ENCODE measurements at regions of chr17 and their contacts with region 1.

Region 1: DNA sequence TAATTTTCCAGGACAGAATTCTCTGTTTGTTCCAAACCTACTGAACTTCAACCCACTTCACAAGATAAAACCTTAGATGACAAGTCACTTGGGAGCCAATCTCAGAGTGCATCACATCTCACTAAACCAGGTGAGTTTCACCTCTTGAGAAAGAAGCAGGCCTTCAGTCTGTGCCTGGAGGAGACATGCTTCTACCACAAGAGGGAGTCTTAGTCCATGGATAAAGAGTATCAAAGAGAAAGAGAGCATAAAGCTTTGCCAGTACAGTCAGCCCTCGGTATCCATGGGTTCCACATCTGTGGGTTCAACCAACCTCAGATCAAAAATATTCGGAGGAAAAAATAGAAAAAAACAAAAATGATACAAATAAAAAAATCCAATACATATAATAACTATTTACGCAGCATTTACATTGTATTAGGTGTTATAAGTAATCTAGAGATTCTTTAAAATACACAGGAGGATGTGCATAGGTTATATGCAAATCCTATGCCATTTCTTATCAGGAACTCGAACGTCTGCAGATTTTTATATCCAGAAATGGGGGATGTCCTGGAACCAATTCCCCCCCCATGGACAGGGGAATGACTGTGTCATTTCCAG is 37.7 kb downstream of the DUSP14 start:
- DNase-seq: peak in 3 of 9 experiments; percentile 13 to 69 (median 56)
- ATAC-seq: peak; percentile 77
- H3K4me3 ChIP-seq: no peak overlapping the region
- H3K4me3 Mint-ChIP-seq: no peak overlapping the region
- H3K27ac ChIP-seq: no peak overlapping the region
- H3K27ac Mint-ChIP-seq: peak overlapping the region; percentile 61
- H3K4me1 ChIP-seq: peaks cover 12% of the 10 kb centered on the region
- H3K4me1 Mint-ChIP-seq: peaks cover 18% of the 10 kb centered on the region
- H3K27me3 ChIP-seq: no peaks in the 10 kb centered on the region
- H3K27me3 Mint-ChIP-seq: no peaks in the 10 kb centered on the region
- CTCF ChIP-seq: peak; percentile 66

Region 2: GRCh38 chr17:36824678-36825091 is 702.7 kb before region 1 on chr17:
- CTCF ChIA-PET with region 1: no interaction called
- POLR2A ChIA-PET with region 1: no interaction called
- intact Hi-C with region 1: no loop called
- DNase-seq: no peak
- ATAC-seq: no peak
- H3K4me3 ChIP-seq: no peak overlapping the region
- H3K4me3 Mint-ChIP-seq: no peak overlapping the region
- H3K27ac ChIP-seq: no peak overlapping the region
- H3K27ac Mint-ChIP-seq: no peak overlapping the region
- H3K4me1 ChIP-seq: no peaks in the 10 kb centered on the region
- H3K4me1 Mint-ChIP-seq: no peaks in the 10 kb centered on the region
- H3K27me3 ChIP-seq: peaks cover 7 to 10% of the 10 kb centered on the region in 2 experiments
- H3K27me3 Mint-ChIP-seq: peaks cover 55% of the 10 kb centered on the region
- CTCF ChIP-seq: no peak

Region 3: GRCh38 chr17:37494401-37494831 is 32.9 kb before region 1 on chr17:
- CTCF ChIA-PET with region 1: no interaction called
- POLR2A ChIA-PET with region 1: no interaction called
- intact Hi-C with region 1: no loop called
- DNase-seq: no peak
- ATAC-seq: no peak
- H3K4me3 ChIP-seq: no peak overlapping the region
- H3K4me3 Mint-ChIP-seq: no peak overlapping the region
- H3K27ac ChIP-seq: no peak overlapping the region
- H3K27ac Mint-ChIP-seq: no peak overlapping the region
- H3K4me1 ChIP-seq: peaks cover 18% of the 10 kb centered on the region
- H3K4me1 Mint-ChIP-seq: peaks cover 17% of the 10 kb centered on the region
- H3K27me3 ChIP-seq: no peaks in the 10 kb centered on the region
- H3K27me3 Mint-ChIP-seq: no peaks in the 10 kb centered on the region
- CTCF ChIP-seq: no peak

Region 4: DNA sequence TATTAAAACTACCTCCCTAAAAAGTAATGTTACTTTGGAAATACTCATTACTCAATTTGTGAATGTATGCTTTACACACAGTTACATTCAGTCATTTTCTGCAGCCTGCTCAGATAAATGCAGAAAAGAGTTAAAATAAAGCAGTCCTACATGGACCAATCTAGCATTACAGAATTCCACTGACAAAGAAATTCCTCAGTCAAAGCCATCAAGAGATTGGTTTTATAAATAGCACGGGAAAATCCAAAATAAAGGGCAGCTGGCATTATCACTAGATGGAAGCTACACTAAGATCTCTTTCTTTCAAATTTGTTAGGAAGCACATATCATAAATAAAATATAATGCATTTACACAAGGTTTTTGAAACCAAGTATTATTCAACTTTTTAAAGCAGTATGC is 20.6 kb after region 1 on chr17:
- CTCF ChIA-PET with region 1: no interaction called
- POLR2A ChIA-PET with region 1: no interaction called
- intact Hi-C with region 1: no loop called
- DNase-seq: no peak
- ATAC-seq: no peak
- H3K4me3 ChIP-seq: no peak overlapping the region
- H3K4me3 Mint-ChIP-seq: no peak overlapping the region
- H3K27ac ChIP-seq: no peak overlapping the region
- H3K27ac Mint-ChIP-seq: peak overlapping the region; percentile 80
- H3K4me1 ChIP-seq: peaks cover 49% of the 10 kb centered on the region
- H3K4me1 Mint-ChIP-seq: peaks cover 73% of the 10 kb centered on the region
- H3K27me3 ChIP-seq: no peaks in the 10 kb centered on the region
- H3K27me3 Mint-ChIP-seq: no peaks in the 10 kb centered on the region
- CTCF ChIP-seq: no peak

Region 5: GRCh38 chr17:37770631-37771518 is 243.5 kb after region 1 on chr17:
- CTCF ChIA-PET with region 1: no interaction called
- POLR2A ChIA-PET with region 1: no interaction called
- intact Hi-C with region 1: loop called in 1 of 2 experiments (anchors 2 kb)
- DNase-seq: peak in 4 of 9 experiments; percentile 10 to 50 (median 22)
- ATAC-seq: no peak
- H3K4me3 ChIP-seq: no peak overlapping the region
- H3K4me3 Mint-ChIP-seq: no peak overlapping the region
- H3K27ac ChIP-seq: no peak overlapping the region
- H3K27ac Mint-ChIP-seq: no peak overlapping the region
- H3K4me1 ChIP-seq: no peaks in the 10 kb centered on the region
- H3K4me1 Mint-ChIP-seq: peaks cover 4% of the 10 kb centered on the region
- H3K27me3 ChIP-seq: peaks cover 0 to 2% of the 10 kb centered on the region in 2 experiments
- H3K27me3 Mint-ChIP-seq: peaks cover 17% of the 10 kb centered on the region
- CTCF ChIP-seq: peak; percentile 25

Region 6: DNA sequence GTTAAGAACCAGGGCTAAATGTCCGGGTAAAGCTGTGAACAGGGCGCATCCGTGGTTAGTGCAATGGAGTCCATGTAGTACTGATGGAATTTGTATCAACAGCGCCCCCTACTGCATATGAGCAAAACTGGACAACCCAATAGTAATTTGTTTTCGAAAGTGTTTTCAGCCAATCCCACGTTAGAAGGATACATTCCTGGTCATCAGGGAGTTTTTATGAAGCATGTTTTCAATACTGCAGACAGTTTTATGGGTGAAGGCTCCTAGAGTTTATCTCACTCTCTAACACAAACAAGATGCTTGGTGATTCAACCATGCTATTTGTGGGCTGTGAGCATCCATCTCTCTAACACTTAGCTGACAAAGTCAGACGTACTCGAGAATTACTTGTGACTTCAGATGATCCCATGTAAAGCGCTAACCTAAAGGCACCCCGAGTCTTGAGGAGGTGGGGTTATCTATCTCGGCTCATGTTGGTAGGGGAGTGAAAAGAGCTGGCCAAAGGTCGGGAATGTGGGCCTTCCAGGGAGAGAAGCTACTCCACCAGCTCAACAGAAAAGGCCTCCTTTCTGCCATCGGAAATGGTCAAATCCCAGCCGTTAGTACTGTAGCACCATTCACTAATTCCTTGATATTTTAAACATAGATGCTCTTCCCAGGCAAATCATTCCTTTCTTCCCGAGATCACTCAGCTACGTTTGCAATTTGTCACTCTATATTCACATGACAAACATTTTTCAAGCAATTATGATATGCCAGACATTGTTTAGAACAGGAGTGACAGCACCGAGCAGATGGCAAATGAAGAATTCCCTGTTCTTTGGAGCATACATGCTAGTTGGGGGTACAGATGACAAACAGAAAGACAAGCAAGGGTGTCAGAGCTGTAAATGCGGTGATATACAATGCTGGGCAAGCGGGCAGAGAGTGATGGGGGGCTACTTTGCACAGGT is 264.4 kb after region 1 on chr17:
- CTCF ChIA-PET with region 1: interaction called, 5 read pairs
- POLR2A ChIA-PET with region 1: no interaction called
- intact Hi-C with region 1: loop called in 1 of 2 experiments (anchors 2 kb)
- DNase-seq: peak in 6 of 9 experiments; percentile 5 to 68 (median 29)
- ATAC-seq: peak; percentile 42
- H3K4me3 ChIP-seq: no peak overlapping the region
- H3K4me3 Mint-ChIP-seq: no peak overlapping the region
- H3K27ac ChIP-seq: no peak overlapping the region
- H3K27ac Mint-ChIP-seq: no peak overlapping the region
- H3K4me1 ChIP-seq: no peaks in the 10 kb centered on the region
- H3K4me1 Mint-ChIP-seq: no peaks in the 10 kb centered on the region
- H3K27me3 ChIP-seq: peaks cover 0 to 3% of the 10 kb centered on the region in 2 experiments
- H3K27me3 Mint-ChIP-seq: peaks cover 19% of the 10 kb centered on the region
- CTCF ChIP-seq: peak; percentile 69

Region 7: GRCh38 chr17:37818689-37819088 is 291.3 kb after region 1 on chr17:
- CTCF ChIA-PET with region 1: interaction called, 4 read pairs
- POLR2A ChIA-PET with region 1: no interaction called
- intact Hi-C with region 1: loop called in 1 of 2 experiments (anchors 5 kb)
- DNase-seq: no peak
- ATAC-seq: no peak
- H3K4me3 ChIP-seq: no peak overlapping the region
- H3K4me3 Mint-ChIP-seq: no peak overlapping the region
- H3K27ac ChIP-seq: no peak overlapping the region
- H3K27ac Mint-ChIP-seq: no peak overlapping the region
- H3K4me1 ChIP-seq: peaks cover 3% of the 10 kb centered on the region
- H3K4me1 Mint-ChIP-seq: peaks cover 15% of the 10 kb centered on the region
- H3K27me3 ChIP-seq: peaks cover 0 to 7% of the 10 kb centered on the region in 2 experiments
- H3K27me3 Mint-ChIP-seq: peaks cover 21% of the 10 kb centered on the region
- CTCF ChIP-seq: no peak

Region 8: DNA sequence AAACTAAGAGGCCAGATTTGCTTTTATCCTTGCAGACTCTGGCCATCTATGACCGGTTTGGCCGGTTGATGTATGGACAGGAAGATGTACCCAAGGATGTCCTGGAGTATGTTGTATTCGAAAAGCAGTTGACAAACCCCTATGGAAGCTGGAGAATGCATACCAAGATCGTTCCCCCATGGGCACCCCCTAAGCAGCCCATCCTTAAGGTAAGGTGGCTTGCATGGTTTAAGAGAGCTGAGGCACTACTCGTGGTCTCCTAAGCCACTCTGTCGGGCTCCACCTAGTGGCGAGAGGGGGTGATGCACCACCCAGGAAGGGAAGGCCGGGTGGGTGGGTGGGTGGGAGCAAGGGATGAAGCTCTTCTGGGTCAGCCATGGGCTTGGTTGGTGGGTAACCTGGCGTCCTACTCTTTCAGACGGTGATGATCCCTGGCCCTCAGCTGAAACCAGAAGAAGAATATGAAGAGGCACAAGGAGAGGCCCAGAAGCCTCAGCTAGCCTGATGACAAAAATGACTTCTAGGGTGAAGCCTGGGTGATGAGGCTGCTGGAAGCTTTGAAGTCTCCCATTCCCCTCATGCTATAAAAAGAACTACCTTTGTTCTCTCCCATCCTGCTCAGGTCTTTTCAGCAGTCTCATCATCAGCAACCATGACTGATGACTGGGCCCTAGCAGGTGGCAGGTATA is 794.9 kb after region 1 on chr17:
- CTCF ChIA-PET with region 1: no interaction called
- POLR2A ChIA-PET with region 1: no interaction called
- intact Hi-C with region 1: loop called in 1 of 2 experiments (anchors 10 kb)
- DNase-seq: peak; percentile 49 to 82 (median 70)
- ATAC-seq: peak; percentile 92
- H3K4me3 ChIP-seq: no peak overlapping the region
- H3K4me3 Mint-ChIP-seq: no peak overlapping the region
- H3K27ac ChIP-seq: no peak overlapping the region
- H3K27ac Mint-ChIP-seq: no peak overlapping the region
- H3K4me1 ChIP-seq: no peaks in the 10 kb centered on the region
- H3K4me1 Mint-ChIP-seq: peaks cover 8% of the 10 kb centered on the region
- H3K27me3 ChIP-seq: no peaks in the 10 kb centered on the region
- H3K27me3 Mint-ChIP-seq: no peaks in the 10 kb centered on the region
- CTCF ChIP-seq: peak; percentile 79

Measured in CD8-positive, alpha-beta T cell (primary cell).